SK-N-SH (cell line): ENCODE measurements at regions of chr2 and their contacts with region 1.

Region 1: DNA sequence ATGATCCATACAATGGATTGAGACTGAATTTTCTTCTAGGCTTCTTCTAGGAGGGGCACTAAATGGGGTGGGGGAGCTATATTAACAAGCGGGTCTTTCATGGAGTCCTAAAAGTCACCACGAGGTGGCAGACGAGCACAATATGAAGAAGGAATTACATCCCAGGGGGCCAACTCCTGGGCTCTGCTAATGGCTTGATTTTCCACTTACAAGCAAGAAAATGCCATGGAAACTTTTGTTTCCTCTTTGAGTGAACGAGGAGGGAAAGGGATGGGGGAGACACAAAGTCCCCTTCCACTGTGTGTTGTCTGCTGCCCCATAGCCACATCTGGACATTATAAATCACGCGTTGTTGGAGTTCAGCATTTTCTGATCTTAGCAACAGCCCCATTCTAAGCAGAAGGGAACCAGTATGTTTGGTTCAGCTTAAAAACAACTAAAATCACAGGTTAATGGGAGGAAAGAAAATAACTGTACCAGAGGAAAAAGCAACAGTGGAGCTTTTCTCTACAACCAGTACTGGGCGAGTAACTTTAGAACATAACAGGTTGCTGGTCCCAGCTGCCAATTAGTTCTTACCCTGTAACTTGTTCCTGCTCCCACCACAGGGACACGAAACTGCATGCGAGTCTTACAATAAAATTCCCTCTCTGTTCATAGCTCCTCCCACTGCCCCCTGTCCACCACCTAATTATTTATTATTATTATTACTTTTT is 285.0 kb upstream of the PARD3B start:
- DNase-seq: peak; percentile 69
- H3K4me3 ChIP-seq: no peak overlapping the region; a peak in 1 of 4 replicates
- H3K27ac ChIP-seq: no peak overlapping the region; a peak in 1 of 4 replicates
- H3K4me1 ChIP-seq: peaks cover 0 to 18% of the 10 kb centered on the region in 2 experiments; a peak in 2 of 4 replicates
- H3K27me3 ChIP-seq: no peaks in the 10 kb centered on the region
- CTCF ChIP-seq: peak; percentile 86
- EP300 ChIP-seq: no peak
- RAD21 ChIP-seq: peak; percentile 75

Region 2: DNA sequence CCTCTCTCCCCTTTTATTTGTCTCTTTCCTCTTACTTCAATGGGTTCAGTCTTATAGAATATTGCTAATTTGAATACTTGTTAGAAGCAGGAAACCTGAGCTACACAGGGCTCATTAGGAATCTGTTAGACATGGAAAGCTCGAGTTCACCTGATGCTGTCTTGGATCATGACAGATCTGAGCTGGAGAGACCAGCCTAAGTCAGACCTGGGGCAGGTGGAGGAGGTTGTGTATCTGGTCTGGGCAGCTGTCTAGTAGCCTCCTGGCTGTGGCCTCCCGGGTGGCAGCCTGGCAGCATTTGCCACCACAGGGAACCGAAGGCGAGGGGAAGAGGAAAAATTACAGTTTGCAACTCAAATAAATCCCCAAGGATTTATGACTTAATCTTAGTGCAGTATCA is 137.9 kb before region 1 on chr2:
- CTCF ChIA-PET with region 1: no interaction called
- POLR2A ChIA-PET with region 1: no interaction called
- DNase-seq: no peak
- H3K4me3 ChIP-seq: no peak overlapping the region
- H3K27ac ChIP-seq: no peak overlapping the region
- H3K4me1 ChIP-seq: no peaks in the 10 kb centered on the region
- H3K27me3 ChIP-seq: no peaks in the 10 kb centered on the region
- CTCF ChIP-seq: no peak
- EP300 ChIP-seq: no peak
- RAD21 ChIP-seq: no peak

Region 3: DNA sequence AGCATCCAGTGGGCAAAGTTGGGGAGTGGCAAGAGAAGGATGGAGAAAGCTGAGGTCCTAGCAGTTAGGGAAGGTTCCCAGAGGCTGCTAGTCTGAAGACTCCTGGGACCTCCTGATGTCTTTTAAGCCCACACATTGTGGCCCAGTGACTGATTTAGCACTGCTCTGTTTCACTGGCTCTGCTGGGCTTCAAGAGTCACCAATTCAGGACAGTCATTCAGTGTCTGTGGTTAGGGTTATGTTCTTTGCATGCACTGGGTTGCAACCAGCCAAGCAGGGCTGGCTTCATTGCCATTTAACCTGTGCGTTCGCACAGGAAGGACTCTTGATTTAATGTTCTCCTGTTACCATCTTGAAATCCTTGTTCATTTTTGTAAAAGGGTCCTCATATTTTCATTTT is 124.6 kb before region 1 on chr2:
- CTCF ChIA-PET with region 1: interaction called, 14 read pairs
- POLR2A ChIA-PET with region 1: no interaction called
- DNase-seq: no peak
- H3K4me3 ChIP-seq: no peak overlapping the region
- H3K27ac ChIP-seq: no peak overlapping the region
- H3K4me1 ChIP-seq: no peaks in the 10 kb centered on the region; a peak in 1 of 4 replicates
- H3K27me3 ChIP-seq: no peaks in the 10 kb centered on the region
- CTCF ChIP-seq: no peak
- EP300 ChIP-seq: no peak
- RAD21 ChIP-seq: no peak

Region 4: DNA sequence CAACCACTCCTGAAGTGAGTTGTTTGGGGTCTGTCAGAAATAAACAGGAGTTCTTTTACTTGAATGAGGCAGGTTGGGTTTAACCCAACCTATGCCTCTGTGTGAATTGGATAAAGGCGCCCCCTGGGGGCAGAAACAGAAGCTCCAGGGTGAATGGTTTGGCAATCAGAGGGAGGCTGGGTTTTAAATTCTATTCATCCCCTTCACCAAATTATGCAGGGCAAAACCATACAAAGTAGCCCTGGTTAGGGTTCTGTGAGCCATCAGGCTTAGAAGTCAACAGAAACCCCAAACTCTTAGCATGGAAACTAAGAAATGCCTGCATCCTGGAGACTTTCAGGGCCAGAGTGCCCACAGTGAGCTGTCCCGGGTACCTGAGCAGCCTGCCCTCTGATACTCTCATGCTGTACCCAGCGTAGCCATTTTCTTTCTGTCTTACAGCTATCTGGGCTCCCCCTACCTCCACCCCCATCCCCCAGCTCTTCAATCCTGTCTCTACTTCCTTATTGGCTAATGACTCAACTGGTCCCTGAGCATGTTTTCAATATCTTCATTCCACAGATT is 82.3 kb before region 1 on chr2:
- CTCF ChIA-PET with region 1: interaction called, 25 read pairs
- POLR2A ChIA-PET with region 1: no interaction called
- DNase-seq: no peak
- H3K4me3 ChIP-seq: no peak overlapping the region; a peak in 1 of 4 replicates
- H3K27ac ChIP-seq: peak overlapping the region in 1 of 2 experiments; percentile 50; a peak in 1 of 4 replicates
- H3K4me1 ChIP-seq: peaks cover 0 to 22% of the 10 kb centered on the region in 2 experiments; a peak in 2 of 4 replicates
- H3K27me3 ChIP-seq: no peaks in the 10 kb centered on the region
- CTCF ChIP-seq: peak; percentile 57
- EP300 ChIP-seq: no peak
- RAD21 ChIP-seq: no peak

Region 5: DNA sequence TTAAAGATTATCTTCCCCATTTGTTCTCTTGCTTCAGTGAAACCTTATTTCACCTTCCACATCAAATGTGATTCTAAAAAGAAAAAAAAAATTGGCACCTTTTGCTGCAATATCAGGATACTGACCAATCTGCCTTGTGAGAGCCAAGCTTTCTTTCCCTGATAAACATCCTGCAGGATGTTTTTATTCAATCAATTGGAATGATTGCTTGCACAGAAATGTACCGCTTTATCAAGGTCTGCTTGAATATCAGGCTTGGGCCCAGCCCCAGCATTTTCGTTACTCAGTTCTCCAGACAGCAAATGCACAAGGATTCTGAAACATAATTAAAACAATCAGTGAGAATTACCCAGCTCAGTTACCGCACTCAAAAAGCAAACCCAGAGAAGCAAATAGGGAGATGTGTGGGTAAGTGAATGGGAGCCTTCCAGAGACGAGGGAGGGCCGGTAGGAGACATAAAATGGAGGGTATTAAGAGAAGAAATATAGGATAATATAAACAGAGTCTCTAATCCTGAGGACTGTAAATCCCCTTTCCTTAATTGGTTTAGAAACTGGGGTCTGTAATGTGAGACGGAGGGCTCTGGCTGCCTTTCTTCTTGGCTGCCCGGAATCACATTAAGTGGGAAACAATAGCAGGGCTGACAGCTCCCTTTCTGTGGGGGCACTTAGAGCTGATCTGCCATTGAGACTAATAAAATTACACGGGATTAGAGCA is 32.0 kb before region 1 on chr2:
- CTCF ChIA-PET with region 1: interaction called, 13 read pairs
- POLR2A ChIA-PET with region 1: no interaction called
- DNase-seq: peak; percentile 47
- H3K4me3 ChIP-seq: no peak overlapping the region
- H3K27ac ChIP-seq: peak overlapping the region in 1 of 2 experiments; percentile 90; a peak in 2 of 4 replicates
- H3K4me1 ChIP-seq: peaks cover 0 to 18% of the 10 kb centered on the region in 2 experiments; a peak in 2 of 4 replicates
- H3K27me3 ChIP-seq: no peaks in the 10 kb centered on the region
- CTCF ChIP-seq: no peak
- EP300 ChIP-seq: peak in 1 of 2 experiments; percentile 37; a peak in 1 of 4 replicates
- RAD21 ChIP-seq: no peak; the same call in 1 of the 2 replicates

Region 6: DNA sequence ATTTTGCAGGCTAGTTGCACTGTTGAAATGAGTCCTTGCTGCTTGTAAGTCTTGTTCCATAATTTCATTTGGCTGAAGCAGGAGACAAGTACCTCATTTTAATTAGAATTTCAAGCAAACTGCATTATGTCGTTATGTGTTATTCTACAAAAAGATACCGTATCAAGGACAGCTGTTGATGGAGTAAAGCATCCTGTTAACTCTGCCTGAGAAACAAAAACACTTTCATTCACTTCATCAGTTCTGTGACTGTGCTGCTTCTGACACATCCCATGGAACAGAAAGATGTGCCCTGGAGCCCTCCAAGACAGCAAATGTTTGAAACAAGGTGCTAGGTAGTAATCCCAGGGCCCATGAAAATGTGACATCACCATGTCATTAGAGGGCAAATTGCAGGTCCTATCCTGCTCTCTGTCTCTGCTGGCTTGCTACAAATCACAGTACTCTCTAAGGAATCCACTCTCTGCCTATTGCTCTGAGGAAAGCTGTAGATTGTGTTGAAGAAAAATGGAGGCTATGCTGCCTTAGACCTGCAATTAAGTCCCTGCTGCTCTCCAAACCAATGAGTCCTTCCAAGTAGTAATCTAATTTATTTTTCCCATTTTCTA is 75.2 kb after region 1 on chr2:
- CTCF ChIA-PET with region 1: no interaction called
- POLR2A ChIA-PET with region 1: no interaction called
- DNase-seq: no peak
- H3K4me3 ChIP-seq: no peak overlapping the region
- H3K27ac ChIP-seq: no peak overlapping the region
- H3K4me1 ChIP-seq: peaks cover 0 to 5% of the 10 kb centered on the region in 2 experiments; a peak in 1 of 4 replicates
- H3K27me3 ChIP-seq: no peaks in the 10 kb centered on the region
- CTCF ChIP-seq: no peak
- EP300 ChIP-seq: no peak
- RAD21 ChIP-seq: no peak

Region 7: GRCh38 chr2:204353823-204354222 is 93.5 kb after region 1 on chr2:
- CTCF ChIA-PET with region 1: no interaction called
- POLR2A ChIA-PET with region 1: no interaction called
- DNase-seq: no peak
- H3K4me3 ChIP-seq: no peak overlapping the region
- H3K27ac ChIP-seq: no peak overlapping the region
- H3K4me1 ChIP-seq: peaks cover 0 to 7% of the 10 kb centered on the region in 2 experiments; a peak in 1 of 4 replicates
- H3K27me3 ChIP-seq: no peaks in the 10 kb centered on the region
- CTCF ChIP-seq: no peak
- EP300 ChIP-seq: no peak
- RAD21 ChIP-seq: no peak

Region 8: GRCh38 chr2:204561749-204562148 is 301.4 kb after region 1 on chr2:
- CTCF ChIA-PET with region 1: no interaction called
- POLR2A ChIA-PET with region 1: no interaction called
- DNase-seq: no peak
- H3K4me3 ChIP-seq: no peak overlapping the region
- H3K27ac ChIP-seq: no peak overlapping the region
- H3K4me1 ChIP-seq: no peaks in the 10 kb centered on the region
- H3K27me3 ChIP-seq: no peaks in the 10 kb centered on the region
- CTCF ChIP-seq: no peak
- EP300 ChIP-seq: no peak
- RAD21 ChIP-seq: no peak

Region 9: DNA sequence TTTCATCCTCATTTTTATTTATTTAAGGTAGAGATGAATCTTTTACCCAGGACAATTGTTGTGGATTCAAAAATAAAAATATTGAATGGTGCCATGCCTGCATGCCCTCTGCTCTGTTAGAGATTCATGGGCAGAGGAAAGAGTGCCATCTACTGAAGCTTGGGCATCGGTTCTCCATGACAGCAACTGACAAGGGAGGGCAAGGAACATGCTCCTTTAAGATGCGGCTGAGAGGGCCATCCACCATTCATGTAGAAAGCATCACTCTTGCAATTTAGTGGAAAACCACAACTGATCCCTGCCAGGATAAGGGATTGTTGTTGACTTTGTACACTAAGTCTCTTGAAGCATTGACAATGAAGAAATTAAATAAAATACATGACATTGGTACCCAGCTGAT is 364.8 kb after region 1 on chr2:
- CTCF ChIA-PET with region 1: interaction called, 10 read pairs
- POLR2A ChIA-PET with region 1: no interaction called
- DNase-seq: peak; percentile 9
- H3K4me3 ChIP-seq: no peak overlapping the region
- H3K27ac ChIP-seq: no peak overlapping the region
- H3K4me1 ChIP-seq: no peaks in the 10 kb centered on the region; a peak in 1 of 4 replicates
- H3K27me3 ChIP-seq: no peaks in the 10 kb centered on the region
- CTCF ChIP-seq: peak; percentile 41
- EP300 ChIP-seq: no peak
- RAD21 ChIP-seq: peak; percentile 73

Region 10: GRCh38 chr2:205680067-205680466 is 1419.7 kb after region 1 on chr2:
- CTCF ChIA-PET with region 1: interaction called, 13 read pairs
- POLR2A ChIA-PET with region 1: no interaction called
- DNase-seq: peak; percentile 70
- H3K4me3 ChIP-seq: peak overlapping the region in 1 of 2 experiments; percentile 2; a peak in 1 of 4 replicates
- H3K27ac ChIP-seq: peak overlapping the region; percentile 17 to 34; a peak in 2 of 4 replicates
- H3K4me1 ChIP-seq: peaks cover 17 to 27% of the 10 kb centered on the region in 2 experiments
- H3K27me3 ChIP-seq: no peaks in the 10 kb centered on the region
- CTCF ChIP-seq: peak; percentile 82
- EP300 ChIP-seq: no peak
- RAD21 ChIP-seq: peak; percentile 78